ENCODE measurements at regions of chr16 and their contacts with region 1.

Region 1: DNA sequence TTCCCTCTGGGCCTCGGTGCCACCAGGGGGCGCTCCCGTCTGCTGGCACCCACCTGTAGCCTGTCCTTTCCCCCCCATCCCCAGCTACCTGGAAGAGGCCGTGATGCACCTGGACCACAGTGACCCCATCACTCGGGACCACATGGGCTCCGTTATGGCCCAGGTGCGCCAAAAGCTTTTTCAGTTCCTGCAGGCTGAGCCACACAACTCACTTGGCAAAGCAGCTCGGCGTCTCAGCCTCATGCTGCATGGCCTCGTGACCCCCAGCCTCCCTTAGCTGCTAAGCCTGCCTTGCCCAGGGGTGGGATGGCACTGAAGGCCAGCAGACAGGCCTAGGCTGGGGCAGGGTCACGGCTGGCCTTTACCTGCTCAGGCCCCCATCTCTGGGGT is 818 bp upstream of the NRN1L start:
- DNase-seq: no peak
- H3K4me3 ChIP-seq: no peak overlapping the region
- H3K27me3 ChIP-seq: no peaks in the 10 kb centered on the region
- CTCF ChIP-seq: peak; percentile 90

Region 2: DNA sequence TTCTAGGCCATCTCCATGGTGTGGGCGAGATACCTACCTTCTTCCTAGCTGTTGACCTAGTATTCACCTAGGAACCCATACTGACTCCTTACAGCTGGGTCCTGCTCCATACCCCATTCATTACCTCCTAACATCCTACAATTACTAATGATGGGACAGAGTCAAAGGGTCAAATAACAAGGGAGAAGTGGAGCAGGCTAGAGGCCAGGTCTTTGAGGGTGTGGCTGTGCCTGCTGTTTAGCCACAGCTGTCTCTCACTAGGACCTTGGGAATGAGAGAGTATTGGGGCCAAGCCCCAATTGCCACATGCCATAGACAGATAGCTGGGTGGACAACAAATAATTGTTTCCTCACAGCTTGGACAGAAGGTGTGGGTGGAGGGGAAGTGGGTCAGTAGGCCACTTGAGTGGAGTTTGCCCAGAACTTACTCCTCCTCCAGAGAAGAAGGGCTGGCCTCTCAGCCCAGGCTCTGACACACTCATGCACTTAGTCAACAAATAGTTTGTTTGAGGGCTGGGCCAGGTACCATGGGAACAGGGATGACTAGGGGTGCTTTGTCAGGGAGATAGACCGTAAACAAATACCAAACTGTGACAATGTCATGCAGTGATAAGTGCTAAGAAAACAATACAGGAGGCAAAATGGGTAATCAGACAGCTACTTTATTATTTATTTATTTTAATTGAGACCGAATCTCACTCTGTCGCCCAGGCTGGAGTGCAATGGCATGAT is 26.2 kb before region 1 on chr16:
- CTCF ChIA-PET with region 1: interaction called, 17 read pairs
- POLR2A ChIA-PET with region 1: no interaction called
- DNase-seq: peak; percentile 96
- H3K4me3 ChIP-seq: no peak overlapping the region
- H3K27me3 ChIP-seq: no peaks in the 10 kb centered on the region
- CTCF ChIP-seq: no peak

Region 3: GRCh38 chr16:67872786-67873537 is 10.9 kb before region 1 on chr16 and contains the start of gene EDC4:
- CTCF ChIA-PET with region 1: interaction called, 41 read pairs
- POLR2A ChIA-PET with region 1: no interaction called
- DNase-seq: no peak
- H3K4me3 ChIP-seq: peak within 1 kb of the TSS; percentile 78
- H3K27me3 ChIP-seq: no peaks in the 10 kb centered on the region
- CTCF ChIP-seq: no peak
- polyA plus RNA-seq, gene EDC4: 19.9 and 27.4 TPM in 2 replicates

Region 4: GRCh38 chr16:67917852-67918236 is 34.0 kb after region 1 on chr16:
- CTCF ChIA-PET with region 1: interaction called, 26 read pairs
- POLR2A ChIA-PET with region 1: interaction called, 3 read pairs
- DNase-seq: no peak
- H3K4me3 ChIP-seq: no peak overlapping the region
- H3K27me3 ChIP-seq: no peaks in the 10 kb centered on the region
- CTCF ChIP-seq: no peak

Region 5: DNA sequence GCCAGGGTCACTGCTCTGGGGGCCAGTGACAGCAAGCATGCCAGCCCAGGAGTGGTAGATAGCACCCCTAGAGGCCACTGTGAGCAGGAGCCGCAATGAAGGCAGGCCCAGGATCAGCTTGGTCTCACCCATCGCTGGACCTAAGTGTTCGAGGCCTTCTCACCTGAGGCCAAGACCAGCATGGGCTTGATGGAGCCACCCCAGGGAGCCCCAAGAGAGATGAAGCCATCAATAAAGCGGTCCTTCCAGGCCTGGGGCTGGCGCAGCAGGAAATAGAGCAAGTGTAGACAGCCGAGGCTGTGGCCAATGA is 58.3 kb after region 1 on chr16:
- CTCF ChIA-PET with region 1: interaction called, 155 read pairs
- POLR2A ChIA-PET with region 1: no interaction called
- DNase-seq: no peak
- H3K4me3 ChIP-seq: no peak overlapping the region
- H3K27me3 ChIP-seq: no peaks in the 10 kb centered on the region
- CTCF ChIP-seq: peak; percentile 73

Region 6: GRCh38 chr16:68146585-68146984 is 262.7 kb after region 1 on chr16:
- CTCF ChIA-PET with region 1: no interaction called
- POLR2A ChIA-PET with region 1: no interaction called
- DNase-seq: peak; percentile 9
- H3K4me3 ChIP-seq: no peak overlapping the region
- H3K27me3 ChIP-seq: no peaks in the 10 kb centered on the region
- CTCF ChIP-seq: no peak